ENCODE measurements at regions of chr9 and their contacts with region 1.

Region 1: GRCh38 chr9:115864581-115864980 is 289.0 kb upstream of the PAPPA start:
- DNase-seq: peak; percentile 96
- H3K4me3 ChIP-seq: no peak overlapping the region
- H3K27ac ChIP-seq: peak overlapping the region; percentile 99
- H3K4me1 ChIP-seq: peaks cover 61% of the 10 kb centered on the region
- H3K27me3 ChIP-seq: no peaks in the 10 kb centered on the region
- CTCF ChIP-seq: no peak

Region 2: DNA sequence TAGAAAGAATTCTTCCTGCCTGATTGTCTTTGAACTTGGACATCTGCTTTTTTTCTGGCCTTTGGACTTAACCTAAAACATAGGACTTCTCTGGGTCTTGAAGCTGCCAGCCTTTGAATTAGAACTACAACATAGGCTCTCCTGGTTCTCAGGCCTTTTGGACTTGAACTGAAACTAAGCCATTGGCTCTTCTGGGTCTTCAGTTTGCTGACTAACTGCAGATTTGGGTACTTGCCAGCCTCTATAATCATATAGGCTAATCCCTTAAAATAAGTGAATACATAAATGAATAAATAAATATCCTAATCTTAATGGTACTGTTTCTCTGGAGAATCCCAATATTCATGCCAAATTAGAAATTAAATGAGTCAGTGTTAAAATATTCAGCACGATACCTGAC is 184.3 kb before region 1 on chr9:
- CTCF ChIA-PET with region 1: no interaction called
- POLR2A ChIA-PET with region 1: no interaction called
- intact Hi-C with region 1: no loop called
- DNase-seq: peak; percentile 39
- H3K4me3 ChIP-seq: no peak overlapping the region
- H3K27ac ChIP-seq: peak overlapping the region; percentile 59
- H3K4me1 ChIP-seq: peaks cover 6% of the 10 kb centered on the region
- H3K27me3 ChIP-seq: no peaks in the 10 kb centered on the region
- CTCF ChIP-seq: no peak

Region 3: DNA sequence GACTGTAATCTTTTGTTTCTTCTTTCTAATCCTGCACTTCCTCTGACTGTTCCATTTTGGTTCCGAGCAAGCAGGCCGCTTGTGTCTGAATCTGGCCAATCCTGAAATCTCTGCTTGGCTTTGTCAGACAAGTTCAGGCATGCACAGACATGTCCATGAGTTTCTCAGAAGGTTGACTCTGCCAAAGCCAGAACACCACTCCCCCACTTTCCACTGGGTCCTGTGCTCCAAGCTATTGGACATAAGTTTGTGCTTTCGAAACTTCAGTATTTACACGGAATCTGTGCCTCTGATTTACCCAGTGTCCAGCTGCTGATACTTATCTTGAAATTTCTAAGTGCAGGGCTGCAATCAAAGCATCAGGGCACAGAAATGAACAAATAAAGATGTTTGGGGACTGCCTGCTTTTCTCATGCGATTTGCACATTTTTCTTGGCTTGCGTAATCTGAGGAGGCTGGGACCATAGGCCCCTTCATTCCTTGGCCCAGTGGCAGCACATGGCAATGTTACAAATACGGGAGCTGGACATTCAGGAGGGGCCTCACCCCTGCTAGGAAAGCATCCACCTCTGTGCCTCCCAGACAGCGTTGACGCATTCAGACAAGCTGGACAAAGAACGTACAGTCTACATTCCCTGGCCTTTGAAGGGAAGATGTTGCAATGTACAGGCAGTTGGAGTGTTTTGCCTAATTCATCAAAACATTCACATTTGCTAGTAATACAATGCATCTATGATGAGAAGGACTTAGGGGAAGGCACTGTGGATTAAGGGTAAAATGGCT is 79.8 kb after region 1 on chr9:
- CTCF ChIA-PET with region 1: no interaction called
- POLR2A ChIA-PET with region 1: no interaction called
- intact Hi-C with region 1: no loop called
- DNase-seq: peak; percentile 77
- H3K4me3 ChIP-seq: no peak overlapping the region
- H3K27ac ChIP-seq: peak overlapping the region; percentile 70
- H3K4me1 ChIP-seq: peaks cover 24% of the 10 kb centered on the region
- H3K27me3 ChIP-seq: no peaks in the 10 kb centered on the region
- CTCF ChIP-seq: no peak

Region 4: DNA sequence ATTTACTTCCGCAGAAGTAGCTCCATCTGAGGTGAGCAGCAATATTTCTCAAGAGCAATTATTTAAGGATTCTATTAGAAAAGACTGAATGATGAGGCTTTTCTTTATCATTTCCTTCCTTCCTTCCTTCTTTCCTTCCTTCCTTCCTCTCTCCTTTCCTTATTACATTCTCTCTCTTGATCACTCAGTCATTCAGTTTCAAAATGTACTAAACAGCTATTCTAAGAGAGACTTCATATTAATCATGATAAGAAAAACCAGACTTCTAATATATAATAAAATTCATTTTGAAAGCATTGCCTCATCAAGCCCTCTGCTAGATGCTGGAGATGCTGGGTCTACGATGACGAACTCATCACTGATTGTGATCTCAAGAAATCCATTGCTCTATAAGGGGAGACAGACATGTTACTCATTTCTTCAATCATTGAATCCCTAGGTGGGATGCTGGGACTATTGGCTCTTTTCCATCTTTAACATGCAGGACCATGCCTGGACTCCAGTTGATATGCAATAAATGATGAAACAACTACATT is 258.7 kb after region 1 on chr9:
- CTCF ChIA-PET with region 1: no interaction called
- POLR2A ChIA-PET with region 1: no interaction called
- intact Hi-C with region 1: loop called (anchors 1 kb)
- DNase-seq: peak; percentile 88
- H3K4me3 ChIP-seq: no peak overlapping the region
- H3K27ac ChIP-seq: peak overlapping the region; percentile 85
- H3K4me1 ChIP-seq: peaks cover 21% of the 10 kb centered on the region
- H3K27me3 ChIP-seq: no peaks in the 10 kb centered on the region
- CTCF ChIP-seq: no peak

Region 5: DNA sequence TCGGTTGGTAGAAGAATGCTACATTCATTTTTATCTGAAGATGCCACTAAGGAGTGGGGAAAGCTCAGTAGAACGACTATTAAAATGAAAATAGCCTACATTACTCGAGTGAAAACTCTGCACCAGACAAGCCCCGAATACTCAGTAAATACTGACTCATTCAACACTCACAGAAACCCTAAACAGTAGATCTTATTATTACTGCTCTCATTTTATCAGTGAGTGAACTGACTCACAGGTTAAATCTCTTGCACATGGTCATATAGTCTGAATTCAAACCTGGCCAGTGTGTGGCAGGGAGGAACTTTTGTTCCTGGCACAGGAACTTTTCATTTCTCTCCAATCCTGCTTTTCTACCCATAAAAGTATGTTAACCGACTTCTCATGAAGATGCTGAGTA is 279.5 kb after region 1 on chr9:
- CTCF ChIA-PET with region 1: interaction called, 4 read pairs
- POLR2A ChIA-PET with region 1: interaction called, 3 read pairs
- intact Hi-C with region 1: loop called (anchors 5 kb)
- DNase-seq: no peak
- H3K4me3 ChIP-seq: no peak overlapping the region
- H3K27ac ChIP-seq: peak overlapping the region; percentile 83
- H3K4me1 ChIP-seq: peaks cover 62% of the 10 kb centered on the region
- H3K27me3 ChIP-seq: no peaks in the 10 kb centered on the region
- CTCF ChIP-seq: no peak

Region 6: DNA sequence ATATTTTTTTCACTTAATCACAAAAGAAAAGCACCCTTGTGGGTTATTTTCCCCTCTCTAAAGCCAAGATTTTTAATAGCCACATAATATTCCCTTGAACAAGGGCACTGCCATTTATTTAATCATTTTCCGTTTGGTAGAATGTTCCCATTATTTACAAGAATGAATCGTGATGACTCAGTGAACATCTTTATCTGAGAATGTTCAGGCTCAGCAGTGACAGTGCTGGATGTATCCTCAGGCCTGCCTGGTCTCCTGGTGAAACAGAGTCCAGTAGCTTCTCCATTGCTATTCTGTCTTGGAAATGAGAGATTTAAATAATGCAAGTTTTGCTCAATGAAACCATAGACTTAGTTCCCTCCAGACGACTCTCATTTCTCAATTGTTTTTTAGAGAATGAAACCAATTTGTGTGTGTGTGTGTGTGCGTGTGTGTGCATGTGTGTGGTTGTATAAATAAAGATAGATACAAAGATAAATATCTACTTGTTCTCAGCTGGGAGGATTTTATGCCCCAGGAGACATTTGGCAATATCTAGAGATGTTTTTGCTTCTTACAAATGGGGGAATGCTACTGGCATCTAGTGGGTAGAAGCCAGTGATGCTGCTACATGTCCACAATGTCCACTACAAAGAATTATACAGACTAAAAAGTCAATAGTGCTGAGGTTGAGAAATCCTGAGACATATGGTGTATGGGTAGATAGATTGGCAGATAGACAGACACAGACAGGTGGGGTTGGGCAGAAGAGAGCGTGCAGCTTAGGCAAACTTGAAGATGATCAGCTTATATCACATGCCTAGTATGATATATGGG is 344.0 kb after region 1 on chr9:
- CTCF ChIA-PET with region 1: no interaction called
- POLR2A ChIA-PET with region 1: no interaction called
- intact Hi-C with region 1: no loop called
- DNase-seq: peak; percentile 25
- H3K4me3 ChIP-seq: no peak overlapping the region
- H3K27ac ChIP-seq: no peak overlapping the region
- H3K4me1 ChIP-seq: peaks cover 16% of the 10 kb centered on the region
- H3K27me3 ChIP-seq: no peaks in the 10 kb centered on the region
- CTCF ChIP-seq: peak; percentile 28; the same call in 1 of the 2 replicates

Region 7: DNA sequence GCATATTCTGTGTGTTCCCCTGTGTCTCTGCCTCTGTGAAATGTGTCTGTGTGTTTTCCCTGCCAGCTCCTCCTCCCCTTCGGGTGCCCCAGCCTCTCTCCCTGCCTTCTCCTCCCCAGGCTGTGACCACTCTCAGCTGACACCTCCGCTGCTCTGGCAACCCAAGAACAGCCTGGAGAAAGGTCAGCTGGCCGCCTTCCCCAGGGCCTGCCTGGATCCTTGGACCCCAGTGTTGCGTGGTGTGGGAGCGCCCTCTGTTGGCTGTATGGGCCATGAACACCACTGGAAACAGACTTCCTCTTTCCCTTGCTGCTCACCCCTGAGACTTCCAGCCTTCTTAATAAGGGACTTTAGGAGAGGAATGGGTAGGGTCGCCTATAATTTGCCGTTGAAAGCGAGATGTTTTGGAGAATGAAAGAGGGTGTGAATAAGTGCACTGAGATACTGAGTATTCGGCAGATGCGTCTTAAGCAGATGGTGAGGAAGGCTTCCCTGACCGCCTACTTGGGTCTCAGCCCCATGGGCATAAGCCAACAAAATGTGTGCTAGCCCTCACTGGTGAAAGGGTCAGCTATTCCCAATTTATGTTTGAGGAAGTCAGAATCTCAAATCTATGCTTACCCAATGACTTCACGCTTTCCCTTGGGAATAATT is 707.6 kb after region 1 on chr9:
- CTCF ChIA-PET with region 1: no interaction called
- POLR2A ChIA-PET with region 1: no interaction called
- intact Hi-C with region 1: loop called (anchors 2 kb)
- DNase-seq: peak; percentile 82
- H3K4me3 ChIP-seq: no peak overlapping the region
- H3K27ac ChIP-seq: peak overlapping the region; percentile 58
- H3K4me1 ChIP-seq: peaks cover 21% of the 10 kb centered on the region
- H3K27me3 ChIP-seq: no peaks in the 10 kb centered on the region
- CTCF ChIP-seq: peak; percentile 99

Measured in A673 (cell line).